ENCODE measurements at regions of chr10 and their contacts with region 1.

Region 1: DNA sequence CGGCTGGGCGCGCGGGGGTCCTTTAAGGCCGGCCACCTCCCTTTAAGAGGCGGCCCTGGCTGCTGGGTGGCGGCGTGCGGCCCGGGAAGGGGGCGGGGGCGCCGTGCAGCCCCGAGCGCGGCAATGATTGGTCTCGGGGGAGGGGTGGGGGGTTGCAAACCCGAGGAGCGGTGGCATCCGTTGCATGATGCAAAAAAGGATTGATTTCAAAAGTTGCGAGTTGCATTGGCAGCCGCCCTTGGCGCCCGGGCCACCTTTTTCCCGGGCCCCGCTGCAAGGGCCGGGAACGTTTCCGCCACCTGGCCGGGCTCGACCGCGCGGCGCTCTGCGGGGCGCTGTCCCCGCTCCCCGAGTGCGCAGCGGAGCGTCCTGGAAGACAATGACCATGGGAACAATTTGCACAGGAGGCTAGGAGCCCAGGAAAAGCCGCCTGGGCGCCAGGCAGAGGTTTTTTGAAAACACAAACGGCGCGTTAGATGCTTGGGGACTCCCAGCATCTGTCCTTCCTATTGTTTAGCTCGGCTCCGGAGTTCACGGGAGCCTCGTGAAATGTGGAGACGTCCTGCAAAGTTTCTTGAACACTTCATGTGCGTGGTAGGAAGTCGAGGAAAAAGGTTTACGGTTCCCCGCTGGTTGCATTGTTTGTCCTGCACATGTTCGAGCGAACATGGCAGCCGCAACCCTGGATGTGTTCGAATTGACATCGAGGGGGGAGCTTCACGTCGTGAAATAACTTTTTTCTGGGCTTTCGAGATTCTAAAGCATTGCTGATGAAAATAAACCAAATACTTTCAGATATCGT is at the start of gene SEPHS1:
- DNase-seq: peak; percentile 85 to 92
- ATAC-seq: peak; percentile 79 to 91 (median 90)
- H3K4me3 ChIP-seq: peak within 1 kb of the TSS; percentile 90
- H3K27ac ChIP-seq: peak within 1 kb of the TSS; percentile 94
- H3K4me1 ChIP-seq: peaks cover 15% of the 10 kb centered on the region
- H3K27me3 ChIP-seq: peaks cover 0 to 2% (median 0%) of the 10 kb centered on the region in 3 donors
- CTCF ChIP-seq: no peak
- total RNA-seq, gene SEPHS1: 25.1 to 27.1 (median 25.5) TPM

Region 2: DNA sequence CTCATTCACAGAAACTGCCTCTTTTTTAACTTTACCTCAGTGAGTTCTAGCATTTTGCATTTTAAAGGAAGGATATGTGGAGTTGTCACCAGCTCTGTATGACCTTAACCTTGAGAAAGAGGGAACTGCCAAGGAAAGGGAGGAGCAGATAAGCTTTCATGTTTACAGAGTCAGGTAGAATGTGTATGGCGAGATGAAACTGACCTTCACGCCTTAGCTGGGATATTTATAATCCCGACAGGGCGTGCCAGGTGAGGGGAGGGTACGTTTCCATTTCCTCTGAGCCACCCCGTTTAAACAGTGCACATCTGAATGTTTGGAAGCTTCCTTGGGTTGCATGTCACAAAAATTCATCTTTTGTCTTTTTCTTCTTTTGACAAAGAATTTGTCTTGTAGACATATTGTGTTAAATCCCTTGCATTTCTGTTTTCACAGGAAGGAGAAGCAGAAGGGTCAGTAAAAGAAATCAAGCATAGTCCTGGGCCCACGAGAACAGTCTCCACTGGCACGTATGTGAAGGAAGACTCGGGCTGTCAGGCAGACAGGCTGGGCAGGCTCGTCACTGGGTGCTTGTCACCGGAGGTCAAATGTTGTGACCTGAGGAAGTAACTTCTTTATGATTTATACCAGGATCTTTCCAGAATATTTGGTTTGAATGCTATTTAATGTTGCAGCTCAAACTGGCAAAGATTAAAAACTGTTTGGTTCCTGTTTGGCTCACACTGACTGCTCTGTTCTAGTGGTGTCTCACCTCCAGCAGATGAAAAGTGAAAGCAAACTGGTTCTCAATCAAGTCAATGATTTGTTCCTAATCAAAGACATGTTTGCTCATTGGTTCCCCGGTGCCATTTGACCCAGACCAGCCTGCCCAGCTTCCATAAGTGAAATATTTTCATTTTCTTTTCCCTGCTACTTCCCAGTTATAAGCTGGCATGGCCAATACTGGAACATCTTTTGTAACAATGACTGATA is 232.3 kb before region 1 on chr10:
- intact Hi-C with region 1: no loop called
- DNase-seq: no peak
- ATAC-seq: peak; percentile 36 to 54 (median 50)
- H3K4me3 ChIP-seq: peak overlapping the region; percentile 20
- H3K27ac ChIP-seq: peak overlapping the region; percentile 84
- H3K4me1 ChIP-seq: peaks cover 51% of the 10 kb centered on the region
- H3K27me3 ChIP-seq: no peaks in the 10 kb centered on the region
- CTCF ChIP-seq: no peak

Region 3: DNA sequence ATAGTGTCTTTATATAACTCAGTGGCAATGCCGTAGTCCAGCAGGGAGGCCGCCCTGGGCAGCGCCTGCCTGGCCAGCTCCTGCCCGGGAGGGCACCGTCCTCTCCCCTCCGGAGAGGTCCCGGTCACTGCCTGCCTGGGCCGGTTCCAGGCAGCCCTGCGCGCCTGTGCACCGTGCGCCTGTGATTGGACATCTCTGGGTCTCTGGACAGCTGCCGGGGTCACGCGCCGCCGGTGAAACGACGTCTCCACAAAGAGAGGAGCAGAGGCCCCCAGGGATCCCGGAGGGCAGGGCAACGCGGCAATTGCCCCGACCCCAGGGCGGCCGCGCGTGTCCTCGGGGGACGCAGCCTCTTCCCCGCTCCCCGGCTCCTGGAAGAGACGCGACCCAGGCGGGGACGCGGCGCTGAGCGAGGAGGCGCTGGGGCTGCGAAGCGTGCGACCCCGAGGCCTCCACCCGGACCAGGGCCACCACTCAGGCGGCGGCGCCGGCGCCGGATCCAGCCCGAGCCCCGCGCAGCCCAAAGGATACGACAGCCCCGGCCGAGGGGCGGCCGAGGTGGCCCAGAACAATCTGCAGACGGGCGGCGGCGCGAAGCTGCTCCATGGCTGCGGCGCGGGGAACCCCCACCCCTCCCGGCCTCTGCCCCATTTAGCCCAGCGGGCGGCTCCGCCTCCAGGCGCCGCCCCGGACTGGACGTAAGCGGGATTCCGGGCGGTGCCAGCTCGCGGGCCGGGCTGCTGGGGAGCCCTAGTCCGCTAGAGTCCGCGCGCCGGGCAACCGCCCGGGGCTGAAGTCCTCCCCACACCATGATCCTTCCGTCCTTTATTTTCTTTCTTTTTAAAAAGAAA is 48.8 kb before region 1 on chr10 and contains the start of gene PHYH:
- intact Hi-C with region 1: loop called in 1 of 2 experiments (anchors 5 kb)
- DNase-seq: peak; percentile 94 to 98
- ATAC-seq: peak; percentile 88 to 93 (median 92)
- H3K4me3 ChIP-seq: peak within 1 kb of the TSS; percentile 87
- H3K27ac ChIP-seq: peak within 1 kb of the TSS; percentile 99
- H3K4me1 ChIP-seq: peaks cover 6% of the 10 kb centered on the region
- H3K27me3 ChIP-seq: no peaks in the 10 kb centered on the region
- CTCF ChIP-seq: no peak
- total RNA-seq, gene PHYH: 129 to 210 (median 183) TPM

Region 4: GRCh38 chr10:13528875-13529713 is 180.7 kb after region 1 on chr10 and contains the start of gene BEND7:
- intact Hi-C with region 1: loop called in 1 of 2 experiments (anchors 10 kb)
- DNase-seq: peak; percentile 59 to 73
- ATAC-seq: peak; percentile 80 to 93 (median 92)
- H3K4me3 ChIP-seq: peak within 1 kb of the TSS; percentile 81
- H3K27ac ChIP-seq: peak within 1 kb of the TSS; percentile 73
- H3K4me1 ChIP-seq: peaks cover 15% of the 10 kb centered on the region
- H3K27me3 ChIP-seq: no peaks in the 10 kb centered on the region
- CTCF ChIP-seq: no peak
- total RNA-seq, gene BEND7: 16.3 to 27.6 (median 23.6) TPM

Region 5: GRCh38 chr10:13597909-13598308 is 249.5 kb after region 1 on chr10:
- intact Hi-C with region 1: no loop called
- DNase-seq: no peak
- ATAC-seq: no peak
- H3K4me3 ChIP-seq: no peak overlapping the region
- H3K27ac ChIP-seq: no peak overlapping the region
- H3K4me1 ChIP-seq: no peaks in the 10 kb centered on the region
- H3K27me3 ChIP-seq: no peaks in the 10 kb centered on the region
- CTCF ChIP-seq: no peak

Measured in psoas muscle (tissue), 8 donors.